Activated CD4-positive, alpha-beta T cell treated with anti-CD3 and anti-CD28 coated beads for 36 hours (primary cell): ENCODE measurements at regions of chr19 and their contacts with region 1.

Region 1: GRCh38 chr19:47391510-47392223 is 27.7 kb downstream of the MEIS3 start:
- DNase-seq: peak; percentile 92
- ATAC-seq: peak; percentile 95
- H3K4me3 Mint-ChIP-seq: no peak overlapping the region
- H3K27ac Mint-ChIP-seq: no peak overlapping the region
- H3K4me1 Mint-ChIP-seq: no peaks in the 10 kb centered on the region
- H3K27me3 Mint-ChIP-seq: no peaks in the 10 kb centered on the region

Region 2: GRCh38 chr19:47284324-47284899 is 107.3 kb before region 1 on chr19:
- CTCF ChIA-PET with region 1: interaction called, 6 read pairs
- POLR2A ChIA-PET with region 1: no interaction called
- intact Hi-C with region 1: loop called in 1 of 2 experiments (anchors 5 kb)
- DNase-seq: peak; percentile 45
- ATAC-seq: no peak
- H3K4me3 Mint-ChIP-seq: no peak overlapping the region
- H3K27ac Mint-ChIP-seq: no peak overlapping the region
- H3K4me1 Mint-ChIP-seq: peaks cover 5% of the 10 kb centered on the region
- H3K27me3 Mint-ChIP-seq: no peaks in the 10 kb centered on the region

Region 3: GRCh38 chr19:47296036-47296435 is 95.6 kb before region 1 on chr19:
- CTCF ChIA-PET with region 1: interaction called, 40 read pairs
- POLR2A ChIA-PET with region 1: no interaction called
- intact Hi-C with region 1: loop called (anchors 1 kb)
- DNase-seq: peak; percentile 87
- ATAC-seq: peak; percentile 98
- H3K4me3 Mint-ChIP-seq: no peak overlapping the region
- H3K27ac Mint-ChIP-seq: no peak overlapping the region
- H3K4me1 Mint-ChIP-seq: peaks cover 2% of the 10 kb centered on the region
- H3K27me3 Mint-ChIP-seq: no peaks in the 10 kb centered on the region